Posterior vena cava (tissue), 2 donors: ENCODE measurements at regions of chr2 and their contacts with region 1.

Region 1: DNA sequence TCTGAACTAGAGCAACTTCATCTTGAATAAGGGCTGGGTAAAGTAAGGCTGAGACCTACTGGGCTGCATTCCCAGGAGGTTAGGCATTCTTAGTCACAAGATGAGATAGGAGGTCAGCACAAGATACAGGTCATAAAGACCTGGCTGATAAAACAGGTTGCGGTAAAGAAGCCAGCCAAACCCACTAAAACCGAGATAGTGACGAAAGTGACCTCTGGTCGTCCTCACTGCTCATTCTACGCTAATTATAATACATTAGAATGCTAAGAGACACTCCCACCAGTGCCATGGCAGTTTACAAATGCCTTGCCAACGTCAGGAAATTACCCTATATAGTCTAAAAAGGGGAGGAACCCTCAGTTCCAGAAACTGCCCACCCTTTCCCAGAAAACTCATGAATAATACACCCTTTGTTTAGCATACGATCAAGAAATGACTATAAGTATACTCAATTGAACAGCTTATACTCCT is 109.1 kb downstream of the FIGN start:
- DNase-seq: no peak

Region 2: GRCh38 chr2:163698857-163699256 is 72.2 kb after region 1 on chr2:
- intact Hi-C with region 1: loop called in 1 of 2 experiments (anchors 2 kb)
- DNase-seq: no peak

Region 3: DNA sequence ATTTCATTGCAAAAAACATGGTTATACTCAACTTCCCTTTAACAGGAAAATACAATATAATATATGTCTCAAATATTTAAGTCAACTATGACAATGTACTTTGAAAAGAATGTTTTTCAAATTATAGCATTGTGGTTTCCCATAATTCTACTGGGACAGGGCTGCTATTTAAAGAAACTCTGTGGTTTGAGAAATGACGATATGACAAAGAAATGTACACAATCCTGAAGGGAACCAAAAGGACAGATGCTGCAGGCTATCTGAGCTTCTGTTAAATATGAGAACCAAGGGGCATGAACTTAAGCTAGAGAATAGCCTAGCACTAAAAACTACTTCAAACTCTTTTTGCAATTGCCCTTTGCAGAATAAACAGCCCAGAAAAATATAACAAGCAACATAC is 578.7 kb after region 1 on chr2:
- intact Hi-C with region 1: no loop called
- DNase-seq: no peak